ENCODE measurements at regions of chr1 and their contacts with region 1.

Region 1: DNA sequence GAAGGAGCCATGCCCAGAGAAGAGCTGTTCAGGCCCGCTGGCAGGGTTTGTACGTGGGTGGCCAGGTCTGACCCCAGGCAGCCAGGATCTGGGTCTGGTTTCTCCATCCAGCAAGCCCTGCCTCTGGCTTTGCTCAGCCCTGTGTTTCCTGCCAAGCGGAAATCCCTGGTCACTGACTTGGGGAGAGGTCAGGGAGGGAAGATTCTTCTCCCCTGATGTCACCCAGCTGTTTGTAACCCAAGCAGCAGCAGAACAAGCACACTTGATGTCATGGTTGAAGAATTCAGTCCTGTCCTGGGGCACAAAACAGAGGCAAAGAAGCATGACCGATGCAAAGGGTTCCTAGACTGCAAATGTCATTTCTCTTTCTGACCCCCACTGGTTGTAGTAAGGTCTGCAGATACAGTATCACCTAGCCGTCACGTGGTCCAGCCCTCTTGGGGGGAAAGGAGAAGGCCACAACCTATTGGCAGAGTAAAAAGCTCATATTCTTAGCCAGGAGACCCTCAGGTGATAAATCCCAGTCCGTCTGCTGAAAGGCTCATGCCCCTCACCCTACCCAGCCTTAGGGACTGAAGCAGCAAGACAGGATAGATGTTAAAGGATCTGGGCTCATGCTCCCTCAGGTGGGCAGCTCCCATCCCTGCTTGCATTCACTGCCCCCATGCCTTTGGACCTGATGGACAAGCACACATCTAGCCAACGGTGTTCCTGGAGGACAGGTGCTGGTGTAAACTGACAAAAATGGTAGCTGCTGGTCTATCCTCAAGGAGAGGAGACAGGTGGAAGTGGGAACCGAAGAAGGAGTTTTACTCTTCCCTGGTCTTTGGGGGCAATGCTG is 120.8 kb downstream of the SYT2 start:
- DNase-seq: peak; percentile 99
- H3K4me3 ChIP-seq: no peak overlapping the region
- H3K27ac ChIP-seq: peak overlapping the region; percentile 98
- H3K27me3 ChIP-seq: no peaks in the 10 kb centered on the region
- CTCF ChIP-seq: no peak

Region 2: GRCh38 chr1:202274611-202275010 is 314.8 kb before region 1 on chr1:
- CTCF ChIA-PET with region 1: interaction called, 12 read pairs
- POLR2A ChIA-PET with region 1: no interaction called
- DNase-seq: no peak
- H3K4me3 ChIP-seq: no peak overlapping the region
- H3K27ac ChIP-seq: no peak overlapping the region
- H3K27me3 ChIP-seq: peaks cover 28% of the 10 kb centered on the region
- CTCF ChIP-seq: peak; percentile 39; the same call in 1 of the 2 replicates

Region 3: DNA sequence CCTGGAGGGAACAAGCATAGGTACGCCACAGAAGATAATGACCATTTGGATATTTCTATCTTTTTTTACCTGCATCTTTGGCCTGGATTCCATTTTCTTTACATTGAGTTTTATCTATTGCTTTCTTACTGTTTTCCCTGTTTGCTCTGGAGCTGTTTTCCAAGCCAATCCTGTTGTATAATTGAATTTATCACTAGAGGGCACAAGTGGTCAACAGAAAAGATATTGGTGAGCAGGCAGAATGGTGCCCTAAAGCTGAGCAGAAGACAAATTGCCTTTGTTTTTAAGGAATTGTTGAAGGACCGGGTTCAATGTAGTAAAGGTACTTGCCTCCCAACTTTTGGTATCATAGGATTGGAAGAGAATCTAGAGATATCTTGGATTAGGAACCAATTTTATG is 88.1 kb before region 1 on chr1:
- CTCF ChIA-PET with region 1: no interaction called
- POLR2A ChIA-PET with region 1: no interaction called
- DNase-seq: no peak
- H3K4me3 ChIP-seq: no peak overlapping the region
- H3K27ac ChIP-seq: no peak overlapping the region
- H3K27me3 ChIP-seq: no peaks in the 10 kb centered on the region
- CTCF ChIP-seq: peak; percentile 58

Region 4: GRCh38 chr1:202571347-202572339 is 17.8 kb before region 1 on chr1:
- CTCF ChIA-PET with region 1: interaction called, 10 read pairs
- POLR2A ChIA-PET with region 1: interaction called, 33 read pairs
- DNase-seq: no peak
- H3K4me3 ChIP-seq: no peak overlapping the region
- H3K27ac ChIP-seq: no peak overlapping the region
- H3K27me3 ChIP-seq: no peaks in the 10 kb centered on the region
- CTCF ChIP-seq: peak; percentile 87

Region 5: GRCh38 chr1:202576816-202577215 is 12.6 kb before region 1 on chr1:
- CTCF ChIA-PET with region 1: interaction called, 10 read pairs
- POLR2A ChIA-PET with region 1: interaction called, 33 read pairs
- DNase-seq: peak; percentile 63
- H3K4me3 ChIP-seq: no peak overlapping the region
- H3K27ac ChIP-seq: peak overlapping the region; percentile 84
- H3K27me3 ChIP-seq: no peaks in the 10 kb centered on the region
- CTCF ChIP-seq: no peak

Region 6: GRCh38 chr1:202599677-202600431 is 10.4 kb after region 1 on chr1:
- CTCF ChIA-PET with region 1: interaction called, 16 read pairs
- POLR2A ChIA-PET with region 1: no interaction called
- DNase-seq: peak; percentile 71
- H3K4me3 ChIP-seq: no peak overlapping the region
- H3K27ac ChIP-seq: peak overlapping the region; percentile 11
- H3K27me3 ChIP-seq: no peaks in the 10 kb centered on the region
- CTCF ChIP-seq: peak; percentile 90

Region 7: DNA sequence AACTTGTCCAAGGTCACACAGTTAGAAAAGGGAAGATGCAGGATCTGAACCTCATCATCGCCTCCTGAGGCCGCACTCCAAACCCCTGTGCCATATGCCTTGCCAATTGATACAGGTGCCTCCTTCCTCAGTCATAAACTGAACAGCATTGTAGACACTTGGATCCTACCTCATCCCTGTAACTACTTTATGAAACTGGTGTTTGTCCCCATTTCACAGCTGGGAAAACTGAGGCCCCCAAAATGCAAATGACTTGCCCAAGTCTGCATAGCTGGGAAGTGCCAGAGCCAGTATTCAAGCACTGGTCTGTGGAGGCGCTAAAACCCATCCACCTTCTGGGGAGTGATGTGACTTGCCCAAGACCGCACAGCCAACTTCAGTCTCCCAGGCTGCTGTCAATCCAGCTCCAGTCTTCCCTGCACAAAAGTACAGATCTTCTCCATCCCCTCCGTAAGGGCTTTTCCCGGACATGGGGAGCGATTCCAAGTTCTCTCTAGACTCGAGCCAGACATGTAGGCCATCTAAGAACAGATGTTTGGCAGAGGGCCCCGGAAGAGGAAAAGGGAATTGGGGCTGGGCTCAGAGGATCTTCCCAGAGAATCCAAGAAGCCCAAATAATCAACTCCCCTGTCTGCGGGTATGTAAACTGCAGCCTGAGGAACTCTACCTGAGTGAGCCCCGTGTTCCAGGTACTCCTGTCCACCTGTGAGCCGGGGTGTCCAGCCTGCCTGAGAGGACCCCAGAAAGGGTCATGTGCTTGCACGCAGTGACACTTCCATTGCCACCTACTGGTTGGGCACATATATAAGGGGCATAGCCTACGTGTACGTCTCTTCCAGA is 60.4 kb after region 1 on chr1:
- CTCF ChIA-PET with region 1: no interaction called
- POLR2A ChIA-PET with region 1: no interaction called
- DNase-seq: no peak
- H3K4me3 ChIP-seq: no peak overlapping the region
- H3K27ac ChIP-seq: no peak overlapping the region
- H3K27me3 ChIP-seq: peaks cover 65% of the 10 kb centered on the region
- CTCF ChIP-seq: no peak